Activated CD4-positive, alpha-beta T cell treated with anti-CD3 and anti-CD28 coated beads for 36 hours (primary cell): ENCODE measurements at regions of chr15 and their contacts with region 1.

Region 1: DNA sequence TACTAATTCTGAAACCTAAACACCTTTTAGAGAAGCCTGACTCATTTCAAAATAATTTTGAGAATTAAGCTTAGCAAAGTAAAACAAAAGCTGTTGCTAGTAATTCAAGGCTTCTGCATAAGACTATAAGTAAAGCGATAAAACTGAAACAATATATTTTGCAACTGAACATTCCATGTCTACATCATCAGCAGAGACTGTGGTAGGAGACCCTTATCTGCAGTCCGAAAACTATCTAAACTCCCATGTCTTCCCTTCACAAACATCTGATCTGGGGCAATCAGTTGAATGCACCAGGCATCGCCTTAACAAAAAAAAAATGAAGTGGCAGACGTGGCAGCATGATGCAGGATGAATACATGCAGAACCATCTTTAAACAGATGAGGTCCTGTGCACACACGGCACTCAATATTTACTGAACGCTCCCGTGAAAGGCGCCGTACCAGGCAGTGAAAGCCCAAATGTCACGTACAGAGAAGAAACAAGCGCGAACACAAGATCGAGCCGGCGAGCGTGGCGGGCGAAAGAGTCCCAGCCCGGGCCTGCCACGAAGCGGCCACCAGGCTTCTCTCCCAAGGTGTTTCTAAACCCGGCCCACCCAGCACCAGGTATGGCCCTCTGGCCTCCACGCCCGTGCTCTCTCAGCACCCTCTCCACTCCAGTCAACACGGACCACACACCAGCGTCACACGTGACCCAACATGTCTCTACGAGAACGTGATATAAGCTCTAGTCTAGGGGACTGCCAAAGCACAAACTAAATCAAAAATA is 63.0 kb downstream of the CHSY1 start:
- DNase-seq: no peak
- ATAC-seq: peak; percentile 70
- H3K4me3 Mint-ChIP-seq: peak overlapping the region; percentile 40
- H3K27ac Mint-ChIP-seq: peak overlapping the region; percentile 84
- H3K4me1 Mint-ChIP-seq: peaks cover 85% of the 10 kb centered on the region
- H3K27me3 Mint-ChIP-seq: no peaks in the 10 kb centered on the region

Region 2: DNA sequence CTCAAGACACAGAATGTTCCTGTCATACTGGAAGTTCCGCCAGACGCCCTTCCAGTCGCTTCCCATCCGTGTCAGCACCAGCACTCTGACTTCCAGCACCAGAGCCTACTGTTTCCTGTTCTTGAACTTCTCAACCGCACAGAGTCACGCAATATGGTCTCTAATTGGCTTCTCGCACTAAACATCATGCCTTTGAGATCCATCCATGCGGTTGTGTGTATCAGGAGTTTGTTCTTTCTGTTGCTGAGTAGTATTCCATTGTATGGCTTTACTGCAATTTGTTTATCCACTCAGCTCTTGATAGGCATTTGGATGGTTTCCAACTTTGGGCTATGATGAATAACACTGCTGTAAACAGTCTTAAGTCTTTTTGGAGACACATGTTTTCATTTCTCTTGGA is 157.6 kb before region 1 on chr15:
- CTCF ChIA-PET with region 1: no interaction called
- POLR2A ChIA-PET with region 1: no interaction called
- intact Hi-C with region 1: no loop called
- DNase-seq: no peak
- ATAC-seq: no peak
- H3K4me3 Mint-ChIP-seq: no peak overlapping the region
- H3K27ac Mint-ChIP-seq: no peak overlapping the region
- H3K4me1 Mint-ChIP-seq: peaks cover 3% of the 10 kb centered on the region
- H3K27me3 Mint-ChIP-seq: peaks cover 28% of the 10 kb centered on the region

Region 3: DNA sequence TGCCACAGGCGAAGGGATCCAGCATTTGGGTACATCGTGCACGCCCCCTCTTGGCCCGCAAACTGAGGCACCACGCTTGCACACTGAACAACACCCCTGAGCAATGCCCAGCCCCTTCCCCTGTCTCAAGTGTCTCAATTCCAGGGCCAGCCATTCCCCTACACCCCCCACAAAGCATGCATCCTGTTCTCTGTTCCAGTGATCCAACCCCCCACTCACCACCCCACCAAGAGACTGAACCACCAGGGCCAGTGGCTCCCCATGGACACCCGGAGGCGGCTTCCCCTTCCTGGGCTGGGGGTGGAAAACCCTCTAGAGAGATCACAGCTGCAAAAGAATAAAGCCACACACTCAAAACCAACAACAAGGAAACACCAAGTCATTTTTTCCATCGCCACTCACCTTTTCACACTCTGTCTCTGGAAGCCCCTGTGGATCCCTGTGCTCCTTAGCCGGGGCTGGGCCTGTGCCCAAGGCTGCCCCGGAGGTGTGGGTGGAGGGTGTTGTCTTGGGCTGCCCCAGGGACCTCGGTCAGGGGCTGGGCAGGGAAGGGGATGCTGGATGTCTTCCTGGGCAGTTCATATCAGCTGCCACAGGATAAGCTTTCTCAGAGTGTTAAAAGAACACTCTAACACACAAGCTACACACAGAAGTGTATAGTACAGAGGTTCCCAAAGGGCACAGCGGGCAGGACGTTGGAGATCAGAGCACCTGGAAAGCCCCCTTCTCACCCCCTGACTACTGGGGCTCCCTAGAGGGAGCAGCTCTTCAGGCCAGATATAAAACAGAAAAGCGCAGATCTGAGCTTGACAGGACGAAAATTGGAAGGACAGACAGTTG is 29.5 kb before region 1 on chr15:
- CTCF ChIA-PET with region 1: no interaction called
- POLR2A ChIA-PET with region 1: no interaction called
- intact Hi-C with region 1: loop called in 1 of 2 experiments (anchors 1 kb)
- DNase-seq: peak; percentile 71
- ATAC-seq: peak; percentile 81
- H3K4me3 Mint-ChIP-seq: peak overlapping the region; percentile 1
- H3K27ac Mint-ChIP-seq: peak overlapping the region; percentile 34
- H3K4me1 Mint-ChIP-seq: peaks cover 39% of the 10 kb centered on the region
- H3K27me3 Mint-ChIP-seq: no peaks in the 10 kb centered on the region

Region 4: GRCh38 chr15:101242160-101242998 is 53.6 kb after region 1 on chr15:
- CTCF ChIA-PET with region 1: interaction called, 3 read pairs
- POLR2A ChIA-PET with region 1: interaction called, 6 read pairs
- intact Hi-C with region 1: loop called in 1 of 2 experiments (anchors 2 kb)
- DNase-seq: peak; percentile 73
- ATAC-seq: peak; percentile 75
- H3K4me3 Mint-ChIP-seq: peak overlapping the region; percentile 40
- H3K27ac Mint-ChIP-seq: peak overlapping the region; percentile 89
- H3K4me1 Mint-ChIP-seq: peaks cover 86% of the 10 kb centered on the region
- H3K27me3 Mint-ChIP-seq: no peaks in the 10 kb centered on the region